Activated CD8-positive, alpha-beta T cell treated with anti-CD3 and anti-CD28 coated beads, Interleukin-2, amount 10 ng/mL, durations not matched to agents 7 days and 5 days (primary cell): ENCODE measurements at regions of chr22 and their contacts with region 1.

Region 1: GRCh38 chr22:27885977-27886842 is 32.8 kb downstream of the PITPNB start:
- DNase-seq: peak; percentile 61
- ATAC-seq: peak; percentile 42
- H3K4me3 Mint-ChIP-seq: no peak overlapping the region
- H3K27ac Mint-ChIP-seq: no peak overlapping the region
- H3K4me1 Mint-ChIP-seq: no peaks in the 10 kb centered on the region
- H3K27me3 Mint-ChIP-seq: no peaks in the 10 kb centered on the region

Region 2: GRCh38 chr22:27903805-27904473 is 17.7 kb after region 1 on chr22:
- CTCF ChIA-PET with region 1: interaction called, 42 read pairs
- POLR2A ChIA-PET with region 1: interaction called, 3 read pairs
- DNase-seq: no peak
- ATAC-seq: peak; percentile 30
- H3K4me3 Mint-ChIP-seq: no peak overlapping the region
- H3K27ac Mint-ChIP-seq: peak overlapping the region; percentile 2
- H3K4me1 Mint-ChIP-seq: peaks cover 28% of the 10 kb centered on the region
- H3K27me3 Mint-ChIP-seq: no peaks in the 10 kb centered on the region

Region 3: DNA sequence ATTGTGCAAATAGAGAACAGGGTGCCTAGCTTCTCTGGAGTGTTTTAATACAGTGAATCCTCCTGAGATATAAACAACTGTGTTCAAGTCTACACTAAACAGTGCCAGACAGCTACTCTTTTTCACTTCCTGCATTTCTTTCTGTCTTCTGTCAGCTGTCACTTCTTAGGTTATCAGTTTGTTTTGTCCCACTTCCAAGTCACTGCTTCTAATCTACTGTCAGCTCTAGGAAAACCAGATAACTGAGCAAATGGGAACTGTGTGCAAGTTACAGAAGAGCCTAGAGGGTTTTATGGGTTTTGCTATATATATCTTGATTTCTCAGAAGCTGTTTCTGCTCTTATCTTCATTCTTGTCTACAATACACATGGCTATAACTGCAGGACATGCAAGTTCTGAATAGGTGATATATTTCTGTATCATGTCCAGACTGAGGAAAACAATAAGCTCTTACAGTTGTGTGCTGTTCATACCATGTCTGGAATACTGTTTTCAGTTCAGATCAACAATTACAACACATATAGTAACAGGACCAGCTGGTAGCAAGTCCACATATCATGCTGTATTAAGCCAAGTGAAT is 27.0 kb after region 1 on chr22:
- CTCF ChIA-PET with region 1: interaction called, 20 read pairs
- POLR2A ChIA-PET with region 1: no interaction called
- DNase-seq: no peak
- ATAC-seq: no peak
- H3K4me3 Mint-ChIP-seq: no peak overlapping the region
- H3K27ac Mint-ChIP-seq: peak overlapping the region; percentile 13
- H3K4me1 Mint-ChIP-seq: peaks cover 49% of the 10 kb centered on the region
- H3K27me3 Mint-ChIP-seq: no peaks in the 10 kb centered on the region

Region 4: GRCh38 chr22:27919222-27919941 is 33.2 kb after region 1 on chr22 and contains the start of gene PITPNB:
- CTCF ChIA-PET with region 1: interaction called, 20 read pairs
- POLR2A ChIA-PET with region 1: interaction called, 7 read pairs
- DNase-seq: peak; percentile 98
- ATAC-seq: peak; percentile 90
- H3K4me3 Mint-ChIP-seq: peak within 1 kb of the TSS; percentile 94
- H3K27ac Mint-ChIP-seq: peak within 1 kb of the TSS; percentile 98
- H3K4me1 Mint-ChIP-seq: peaks cover 59% of the 10 kb centered on the region
- H3K27me3 Mint-ChIP-seq: no peaks in the 10 kb centered on the region
- total RNA-seq, gene PITPNB: 78.7 to 84.1 TPM